Activated CD8-positive, alpha-beta T cell treated with anti-CD3 and anti-CD28 coated beads for 36 hours (primary cell): ENCODE measurements at regions of chr4 and their contacts with region 1.

Region 1: GRCh38 chr4:39353478-39354253 is 12.5 kb downstream of the RFC1 start:
- DNase-seq: peak; percentile 44
- ATAC-seq: peak; percentile 79
- H3K4me3 Mint-ChIP-seq: peak overlapping the region; percentile 73
- H3K27ac Mint-ChIP-seq: peak overlapping the region; percentile 99
- H3K4me1 Mint-ChIP-seq: peaks cover 79% of the 10 kb centered on the region
- H3K27me3 Mint-ChIP-seq: no peaks in the 10 kb centered on the region
- CTCF ChIP-seq: no peak

Region 2: GRCh38 chr4:39365830-39366771 is 12.4 kb after region 1 on chr4 and contains the start of gene RFC1:
- CTCF ChIA-PET with region 1: interaction called, 12 read pairs
- POLR2A ChIA-PET with region 1: interaction called, 87 read pairs
- intact Hi-C with region 1: no loop called
- DNase-seq: peak; percentile 97
- ATAC-seq: peak; percentile 87
- H3K4me3 Mint-ChIP-seq: peak within 1 kb of the TSS; percentile 91
- H3K27ac Mint-ChIP-seq: peak within 1 kb of the TSS; percentile 95
- H3K4me1 Mint-ChIP-seq: peaks cover 26% of the 10 kb centered on the region
- H3K27me3 Mint-ChIP-seq: no peaks in the 10 kb centered on the region
- CTCF ChIP-seq: no peak
- total RNA-seq, gene RFC1: 108 to 114 TPM

Region 3: GRCh38 chr4:39446751-39447573 is 93.3 kb after region 1 on chr4:
- CTCF ChIA-PET with region 1: no interaction called
- POLR2A ChIA-PET with region 1: interaction called, 4 read pairs
- intact Hi-C with region 1: loop called (anchors 5 kb)
- DNase-seq: peak; percentile 75
- ATAC-seq: peak; percentile 88
- H3K4me3 Mint-ChIP-seq: peak overlapping the region; percentile 49
- H3K27ac Mint-ChIP-seq: peak overlapping the region; percentile 11
- H3K4me1 Mint-ChIP-seq: peaks cover 28% of the 10 kb centered on the region
- H3K27me3 Mint-ChIP-seq: no peaks in the 10 kb centered on the region
- CTCF ChIP-seq: no peak

Region 4: DNA sequence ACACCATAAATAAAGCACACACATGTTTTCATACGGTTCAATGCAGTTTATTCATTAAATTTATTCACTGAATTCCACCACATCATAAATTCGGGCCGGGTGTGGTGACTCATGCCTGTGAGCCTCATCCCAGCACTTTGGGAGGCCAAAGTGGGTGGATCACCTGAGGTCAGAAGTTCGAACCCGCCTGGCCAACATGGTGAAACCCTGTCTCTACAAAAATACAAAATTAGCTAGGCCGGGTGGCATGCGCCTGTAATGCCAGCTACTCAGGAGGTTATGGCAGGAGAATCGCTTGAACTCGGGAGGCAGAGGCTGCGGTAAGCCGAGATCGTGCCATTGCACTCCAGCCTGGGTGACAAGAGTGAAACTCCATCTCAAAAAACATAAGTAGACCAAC is 492.5 kb after region 1 on chr4:
- CTCF ChIA-PET with region 1: no interaction called
- POLR2A ChIA-PET with region 1: no interaction called
- intact Hi-C with region 1: no loop called
- DNase-seq: no peak
- ATAC-seq: no peak
- H3K4me3 Mint-ChIP-seq: no peak overlapping the region
- H3K27ac Mint-ChIP-seq: no peak overlapping the region
- H3K4me1 Mint-ChIP-seq: no peaks in the 10 kb centered on the region
- H3K27me3 Mint-ChIP-seq: no peaks in the 10 kb centered on the region
- CTCF ChIP-seq: no peak